Adrenal gland (tissue), 19 donors: ENCODE measurements at regions of chr10 and their contacts with region 1.

Region 1: GRCh38 chr10:70880077-70880534 is 8.3 kb downstream of the PCBD1 start:
- DNase-seq: peak; percentile 78 to 95 (median 85)
- H3K4me3 ChIP-seq: no peak overlapping the region
- H3K27ac ChIP-seq: peak overlapping the region in 1 of 5 donors; percentile 33
- H3K4me1 ChIP-seq: no peaks in the 10 kb centered on the region
- H3K27me3 ChIP-seq: no peaks in the 10 kb centered on the region
- CTCF ChIP-seq: peak; percentile 81 to 98 (median 96)
- POLR2A ChIP-seq: no peak

Region 2: GRCh38 chr10:70549962-70550458 is 330.1 kb before region 1 on chr10:
- intact Hi-C with region 1: loop called in 1 of 2 experiments (anchors 5 kb)
- DNase-seq: peak; percentile 48 to 87 (median 69)
- H3K4me3 ChIP-seq: no peak overlapping the region
- H3K27ac ChIP-seq: no peak overlapping the region
- H3K4me1 ChIP-seq: no peaks in the 10 kb centered on the region
- H3K27me3 ChIP-seq: no peaks in the 10 kb centered on the region
- CTCF ChIP-seq: peak; percentile 87 to 94 (median 89)
- POLR2A ChIP-seq: no peak

Region 3: GRCh38 chr10:70672165-70673042 is 207.7 kb before region 1 on chr10 and contains the start of gene ADAMTS14:
- intact Hi-C with region 1: no loop called
- DNase-seq: peak in 6 of 7 donors; percentile 29 to 52 (median 39)
- H3K4me3 ChIP-seq: peak within 1 kb of the TSS in 1 of 4 donors; percentile 45
- H3K27ac ChIP-seq: no peak within 1 kb of the TSS
- H3K4me1 ChIP-seq: peaks cover 3 to 9% of the 10 kb centered on the region in 2 donors
- H3K27me3 ChIP-seq: no peaks in the 10 kb centered on the region
- CTCF ChIP-seq: no peak
- POLR2A ChIP-seq: no peak
- total RNA-seq, gene ADAMTS14: under 0.01 to 0.61 (median 0.25) TPM in 6 of 9 donors, not detected in the others

Region 4: GRCh38 chr10:70815504-70816219 is 64.4 kb before region 1 on chr10 and contains the start of gene SGPL1:
- intact Hi-C with region 1: loop called (anchors 2 to 5 kb)
- DNase-seq: peak; percentile 79 to 92 (median 90)
- H3K4me3 ChIP-seq: peak within 1 kb of the TSS in 3 of 4 donors; percentile 49 to 96 (median 87)
- H3K27ac ChIP-seq: peak within 1 kb of the TSS; percentile 64 to 95 (median 88)
- H3K4me1 ChIP-seq: peaks cover 7 to 20% of the 10 kb centered on the region in 2 donors
- H3K27me3 ChIP-seq: no peaks in the 10 kb centered on the region
- CTCF ChIP-seq: peak; percentile 44 to 100 (median 86)
- POLR2A ChIP-seq: peak in 1 of 2 donors; percentile 6
- total RNA-seq, gene SGPL1: 31.3 to 47.9 (median 35.3) TPM